Left ventricle myocardium inferior (tissue), 1 donor: ENCODE measurements at regions of chr5 and their contacts with region 1.

Region 1: DNA sequence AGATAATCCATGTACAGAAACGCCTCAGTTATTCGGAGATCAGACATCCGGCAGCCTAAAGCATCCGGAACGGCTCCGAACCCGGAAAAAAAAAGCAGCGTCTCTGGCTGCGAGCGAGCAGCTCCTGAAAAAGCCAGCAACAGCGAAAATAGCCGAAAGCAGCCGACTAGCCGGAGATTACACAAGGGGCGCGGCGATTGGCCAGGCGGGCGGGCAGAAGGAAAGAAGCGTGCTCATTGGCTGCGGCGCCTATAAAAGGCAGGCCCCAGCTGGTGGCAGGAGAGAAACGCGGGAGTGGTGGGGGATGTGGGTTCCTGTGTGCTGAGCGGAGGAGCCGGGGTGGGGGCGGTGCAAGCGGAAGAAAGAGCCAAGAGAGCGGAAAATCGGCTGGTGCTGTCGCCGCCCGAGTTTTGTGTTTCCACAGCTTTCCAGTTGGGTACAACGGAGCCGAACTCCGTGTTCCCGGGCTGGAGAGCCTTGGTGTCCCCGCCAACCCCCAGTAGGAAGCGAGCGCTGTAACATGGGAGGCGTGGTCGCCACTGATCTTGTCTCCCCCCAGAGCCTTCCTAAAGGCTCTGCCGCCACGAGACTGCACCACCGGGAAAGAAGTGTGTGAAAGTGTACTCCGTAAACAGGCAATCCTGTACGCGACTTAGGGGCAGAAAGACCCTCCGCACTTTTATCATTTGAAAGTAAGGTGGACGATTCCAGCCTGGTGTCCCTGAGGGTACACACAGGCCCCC is at the start of gene ARL15:
- DNase-seq: peak; percentile 99
- H3K4me3 ChIP-seq: peak within 1 kb of the TSS; percentile 91
- H3K27ac ChIP-seq: peak within 1 kb of the TSS; percentile 91
- H3K4me1 ChIP-seq: peaks cover 48% of the 10 kb centered on the region
- H3K27me3 ChIP-seq: no peaks in the 10 kb centered on the region
- CTCF ChIP-seq: no peak
- total RNA-seq, gene ARL15: 18.2 TPM

Region 2: GRCh38 chr5:54217826-54218503 is 92.6 kb before region 1 on chr5:
- intact Hi-C with region 1: no loop called
- DNase-seq: no peak
- H3K4me3 ChIP-seq: no peak overlapping the region
- H3K27ac ChIP-seq: no peak overlapping the region
- H3K4me1 ChIP-seq: peaks cover 25% of the 10 kb centered on the region
- H3K27me3 ChIP-seq: no peaks in the 10 kb centered on the region
- CTCF ChIP-seq: peak; percentile 89

Region 3: GRCh38 chr5:54249210-54250028 is 61.2 kb before region 1 on chr5:
- intact Hi-C with region 1: loop called (anchors 10 kb)
- DNase-seq: peak; percentile 21
- H3K4me3 ChIP-seq: no peak overlapping the region
- H3K27ac ChIP-seq: no peak overlapping the region
- H3K4me1 ChIP-seq: peaks cover 61% of the 10 kb centered on the region
- H3K27me3 ChIP-seq: no peaks in the 10 kb centered on the region
- CTCF ChIP-seq: no peak

Region 4: DNA sequence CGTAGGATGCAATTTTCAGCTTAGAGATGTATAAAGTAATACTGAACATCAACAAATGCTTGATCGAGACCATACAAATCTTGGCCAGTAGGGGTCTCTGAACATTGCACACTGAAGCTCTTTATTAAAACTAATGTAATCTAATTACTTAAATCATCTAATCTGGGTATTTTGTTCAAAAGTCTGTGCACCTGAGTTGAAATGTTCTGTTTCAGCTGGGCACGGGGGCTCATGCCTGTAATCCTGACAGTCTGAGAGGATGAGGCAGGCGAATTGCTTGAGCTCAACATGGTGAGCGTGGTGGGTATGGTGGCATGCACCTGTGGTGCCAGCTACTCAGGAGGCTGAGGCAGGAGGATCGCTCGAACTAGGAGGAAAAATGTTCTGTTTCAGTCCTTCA is 633.8 kb after region 1 on chr5:
- intact Hi-C with region 1: no loop called
- DNase-seq: no peak
- H3K4me3 ChIP-seq: no peak overlapping the region
- H3K27ac ChIP-seq: no peak overlapping the region
- H3K4me1 ChIP-seq: no peaks in the 10 kb centered on the region
- H3K27me3 ChIP-seq: peaks cover 20% of the 10 kb centered on the region
- CTCF ChIP-seq: peak; percentile 76

Region 5: GRCh38 chr5:55370291-55370925 is 1059.8 kb after region 1 on chr5:
- intact Hi-C with region 1: no loop called
- DNase-seq: no peak
- H3K4me3 ChIP-seq: no peak overlapping the region
- H3K27ac ChIP-seq: no peak overlapping the region
- H3K4me1 ChIP-seq: no peaks in the 10 kb centered on the region
- H3K27me3 ChIP-seq: no peaks in the 10 kb centered on the region
- CTCF ChIP-seq: no peak